H1 (cell line): ENCODE measurements at regions of chr6 and their contacts with region 1.

Region 1: GRCh38 chr6:6696867-6697531 is 108.5 kb downstream of the LY86 start:
- DNase-seq: peak; percentile 43 to 88
- H3K4me3 ChIP-seq: no peak overlapping the region
- H3K27ac ChIP-seq: no peak overlapping the region
- H3K4me1 ChIP-seq: peaks cover 19 to 28% (median 20%) of the 10 kb centered on the region in 4 experiments
- H3K27me3 ChIP-seq: no peaks in the 10 kb centered on the region; a peak in 1 of 7 replicates
- CTCF ChIP-seq: peak; percentile 85 to 88 (median 86)
- EP300 ChIP-seq: no peak
- POLR2A ChIP-seq: no peak
- RAD21 ChIP-seq: peak; percentile 85 to 92

Region 2: DNA sequence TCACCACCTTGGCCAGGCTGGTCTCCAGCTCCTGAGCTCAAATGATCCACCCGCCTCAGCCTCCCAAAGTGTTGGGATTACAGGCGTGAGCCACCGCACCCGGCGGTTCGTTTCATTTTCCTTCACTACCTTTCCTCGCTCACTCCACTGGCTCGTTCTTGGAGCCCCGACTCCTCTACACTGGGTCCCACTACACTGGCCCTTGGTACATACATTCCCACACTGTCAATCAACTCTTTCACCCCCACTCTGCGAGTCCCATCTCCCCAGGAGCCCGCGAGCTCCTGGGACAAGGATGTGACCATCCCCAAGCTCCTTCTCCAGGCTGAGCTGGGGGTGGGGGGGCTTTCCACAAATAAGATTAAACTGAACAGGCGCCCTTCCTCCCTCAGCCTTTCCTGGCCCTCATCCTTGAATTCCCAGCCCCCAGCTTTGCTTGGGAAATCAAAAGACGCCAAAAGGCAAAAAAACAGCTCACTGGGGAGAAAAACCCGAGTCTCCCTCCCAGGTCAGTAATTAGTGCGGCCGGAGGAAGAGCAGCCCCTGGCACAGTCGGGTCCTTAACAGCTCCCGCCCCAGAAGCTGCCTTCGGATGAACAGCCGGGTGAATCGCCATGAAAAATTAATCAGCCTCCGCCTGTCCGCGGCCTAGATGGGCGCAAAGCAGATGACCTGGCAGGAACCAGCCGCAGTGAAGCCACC is 151.2 kb before region 1 on chr6:
- CTCF ChIA-PET with region 1: no interaction called
- POLR2A ChIA-PET with region 1: no interaction called
- DNase-seq: peak in 1 of 2 experiments; percentile 48
- H3K4me3 ChIP-seq: peak overlapping the region; percentile 25 to 67 (median 58)
- H3K27ac ChIP-seq: no peak overlapping the region
- H3K4me1 ChIP-seq: peaks cover 5 to 11% (median 7%) of the 10 kb centered on the region in 4 experiments
- H3K27me3 ChIP-seq: peaks cover 2 to 20% (median 13%) of the 10 kb centered on the region in 4 experiments; a peak in 6 of 7 replicates
- CTCF ChIP-seq: no peak
- EP300 ChIP-seq: no peak
- POLR2A ChIP-seq: no peak
- RAD21 ChIP-seq: no peak

Region 3: DNA sequence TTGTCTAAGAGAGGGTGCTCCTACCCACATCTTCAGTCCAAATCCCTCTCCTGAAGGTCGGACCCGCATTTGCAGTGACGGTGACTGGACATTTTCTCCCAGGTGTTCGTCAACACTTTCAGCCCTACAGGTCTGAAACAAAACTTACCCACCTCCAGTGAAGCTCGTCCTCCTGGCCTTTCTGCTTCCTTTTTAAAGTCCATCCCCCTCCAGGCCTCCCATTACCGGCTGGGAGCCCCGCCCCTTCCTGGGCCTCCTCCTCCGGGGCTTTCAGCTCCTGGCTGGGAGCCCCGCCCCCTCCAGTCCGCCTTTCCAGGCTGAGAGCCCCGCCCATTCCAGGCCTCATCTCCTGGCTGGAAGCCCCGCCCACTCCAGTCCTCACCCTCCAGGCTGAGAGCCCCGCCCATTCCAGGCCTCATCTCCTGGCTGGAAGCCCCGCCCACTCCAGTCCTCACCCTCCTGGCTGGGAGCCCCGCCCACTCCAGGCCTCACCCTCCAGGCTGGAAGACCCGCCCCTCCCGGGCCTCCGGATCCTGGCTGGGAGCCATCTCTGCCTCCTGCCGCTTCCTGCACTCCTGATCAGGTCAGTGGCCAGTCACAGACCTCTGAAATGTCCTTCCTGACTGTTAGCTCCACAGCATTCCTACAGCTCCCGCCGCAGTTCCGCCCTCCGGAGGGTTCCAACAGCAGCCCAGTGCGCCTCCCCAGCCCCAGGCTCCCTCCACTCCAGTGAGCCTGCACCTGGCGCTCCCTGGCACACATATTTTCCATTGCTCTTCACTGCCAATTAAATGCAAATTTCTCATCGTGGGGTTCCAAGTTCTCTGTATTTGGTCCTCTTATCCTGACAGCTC is 10.0 kb before region 1 on chr6:
- CTCF ChIA-PET with region 1: interaction called, 64 read pairs
- POLR2A ChIA-PET with region 1: interaction called, 4 read pairs
- DNase-seq: peak; percentile 94 to 97
- H3K4me3 ChIP-seq: peak overlapping the region; percentile 49 to 64 (median 57); a peak in 7 of 8 replicates
- H3K27ac ChIP-seq: peak overlapping the region; percentile 41; the same call in 1 of the 2 replicates
- H3K4me1 ChIP-seq: peaks cover 8 to 17% (median 16%) of the 10 kb centered on the region in 4 experiments
- H3K27me3 ChIP-seq: no peaks in the 10 kb centered on the region
- CTCF ChIP-seq: no peak
- EP300 ChIP-seq: no peak
- POLR2A ChIP-seq: peak in 1 of 2 experiments; percentile 66; a peak in 1 of 3 replicates
- RAD21 ChIP-seq: 0 out of 4 replicates have a peak, but pooled peaks of 1 of the 2 experiments have one; percentile 3

Region 4: GRCh38 chr6:6707143-6707542 is 10.1 kb after region 1 on chr6:
- CTCF ChIA-PET with region 1: interaction called, 15 read pairs
- POLR2A ChIA-PET with region 1: no interaction called
- DNase-seq: no peak
- H3K4me3 ChIP-seq: no peak overlapping the region
- H3K27ac ChIP-seq: no peak overlapping the region
- H3K4me1 ChIP-seq: peaks cover 0 to 2% (median under 1%) of the 10 kb centered on the region in 4 experiments; a peak in 3 of 7 replicates
- H3K27me3 ChIP-seq: no peaks in the 10 kb centered on the region
- CTCF ChIP-seq: no peak
- EP300 ChIP-seq: no peak
- POLR2A ChIP-seq: no peak
- RAD21 ChIP-seq: no peak

Region 5: DNA sequence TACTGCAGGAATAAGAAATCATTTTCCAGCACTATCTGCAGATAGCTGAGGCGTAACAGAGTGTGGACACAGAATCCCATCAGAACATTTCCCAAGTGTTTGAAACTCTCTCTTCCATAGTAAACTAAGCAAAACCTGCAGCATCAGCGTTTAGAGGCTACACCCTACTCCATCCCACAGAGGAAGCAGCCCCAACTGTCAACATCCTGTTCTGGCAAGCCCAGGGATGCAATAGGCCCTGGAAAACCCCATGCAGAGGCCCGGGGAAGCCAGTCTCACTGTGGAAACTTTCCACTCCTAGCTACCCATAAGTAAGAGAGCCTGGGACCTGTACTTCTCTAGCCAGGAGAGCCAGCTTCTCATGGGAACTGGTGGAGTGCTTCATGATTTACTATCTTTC is 21.0 kb after region 1 on chr6:
- CTCF ChIA-PET with region 1: interaction called, 25 read pairs
- POLR2A ChIA-PET with region 1: interaction called, 4 read pairs
- DNase-seq: no peak
- H3K4me3 ChIP-seq: no peak overlapping the region
- H3K27ac ChIP-seq: no peak overlapping the region
- H3K4me1 ChIP-seq: peaks cover 3 to 15% (median 6%) of the 10 kb centered on the region in 4 experiments; a peak in 6 of 7 replicates
- H3K27me3 ChIP-seq: no peaks in the 10 kb centered on the region
- CTCF ChIP-seq: no peak
- EP300 ChIP-seq: no peak
- POLR2A ChIP-seq: no peak
- RAD21 ChIP-seq: no peak

Region 6: DNA sequence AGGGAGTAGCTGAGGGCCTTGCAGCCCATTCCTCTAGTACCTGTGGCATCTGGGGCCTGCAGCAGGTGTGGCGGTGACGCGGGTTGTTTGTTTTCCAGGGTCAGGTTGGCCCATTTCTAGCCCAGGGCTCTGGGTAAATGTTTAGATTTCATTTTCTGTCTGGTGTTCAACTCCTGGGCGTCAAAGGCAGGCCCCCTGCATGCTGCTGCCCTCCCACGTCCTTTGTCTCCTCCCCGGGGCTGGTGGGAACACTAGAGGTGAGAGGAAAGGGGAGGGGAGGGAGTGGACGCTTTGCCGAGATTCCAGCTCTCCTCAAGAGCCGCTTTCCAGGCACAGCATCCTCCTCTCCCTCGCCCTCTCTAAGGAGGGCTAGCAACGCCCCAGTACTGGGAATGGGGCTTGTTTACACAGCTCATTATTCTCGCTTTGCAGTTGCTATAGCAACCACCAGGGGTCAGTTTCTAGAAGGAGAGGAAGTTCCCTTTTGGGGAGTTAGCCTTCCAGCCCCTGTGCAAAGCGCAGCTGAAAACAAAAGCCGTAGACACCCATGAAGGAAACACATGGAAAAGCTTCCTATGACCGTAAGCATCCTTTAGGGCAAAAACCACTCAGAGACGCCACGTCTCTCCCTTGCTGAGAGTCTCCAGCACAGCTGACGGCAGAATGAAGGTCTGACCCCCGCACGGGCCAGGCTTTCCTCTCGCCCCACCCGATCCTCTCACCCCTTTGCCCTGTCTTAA is 62.1 kb after region 1 on chr6:
- CTCF ChIA-PET with region 1: interaction called, 10 read pairs
- POLR2A ChIA-PET with region 1: no interaction called
- DNase-seq: peak in 1 of 2 experiments; percentile 74
- H3K4me3 ChIP-seq: peak overlapping the region; percentile 18 to 46 (median 30); a peak in 7 of 8 replicates
- H3K27ac ChIP-seq: peak overlapping the region; percentile 65
- H3K4me1 ChIP-seq: peaks cover 0 to 9% (median 6%) of the 10 kb centered on the region in 4 experiments; a peak in 6 of 7 replicates
- H3K27me3 ChIP-seq: no peaks in the 10 kb centered on the region
- CTCF ChIP-seq: peak in 2 of 3 experiments; percentile 48 to 64; a peak in 3 of 4 replicates
- EP300 ChIP-seq: peak in 1 of 2 experiments; percentile 77; a peak in 1 of 3 replicates
- POLR2A ChIP-seq: peak in 1 of 2 experiments; percentile 76; a peak in 2 of 3 replicates
- RAD21 ChIP-seq: peak; percentile 39 to 66; a peak in 3 of 4 replicates